Left ventricle myocardium inferior (tissue), 1 donor: ENCODE measurements at regions of chr11 and their contacts with region 1.

Region 1: GRCh38 chr11:101436511-101437142 is 147.2 kb downstream of the TRPC6 start:
- DNase-seq: no peak
- H3K4me3 ChIP-seq: no peak overlapping the region
- H3K27ac ChIP-seq: no peak overlapping the region
- H3K4me1 ChIP-seq: peaks cover 14% of the 10 kb centered on the region
- H3K27me3 ChIP-seq: no peaks in the 10 kb centered on the region
- CTCF ChIP-seq: peak; percentile 72

Region 2: GRCh38 chr11:100970283-100971164 is 466.1 kb before region 1 on chr11:
- intact Hi-C with region 1: loop called (anchors 10 kb)
- DNase-seq: no peak
- H3K4me3 ChIP-seq: no peak overlapping the region
- H3K27ac ChIP-seq: peak overlapping the region; percentile 67
- H3K4me1 ChIP-seq: peaks cover 13% of the 10 kb centered on the region
- H3K27me3 ChIP-seq: no peaks in the 10 kb centered on the region
- CTCF ChIP-seq: no peak

Region 3: DNA sequence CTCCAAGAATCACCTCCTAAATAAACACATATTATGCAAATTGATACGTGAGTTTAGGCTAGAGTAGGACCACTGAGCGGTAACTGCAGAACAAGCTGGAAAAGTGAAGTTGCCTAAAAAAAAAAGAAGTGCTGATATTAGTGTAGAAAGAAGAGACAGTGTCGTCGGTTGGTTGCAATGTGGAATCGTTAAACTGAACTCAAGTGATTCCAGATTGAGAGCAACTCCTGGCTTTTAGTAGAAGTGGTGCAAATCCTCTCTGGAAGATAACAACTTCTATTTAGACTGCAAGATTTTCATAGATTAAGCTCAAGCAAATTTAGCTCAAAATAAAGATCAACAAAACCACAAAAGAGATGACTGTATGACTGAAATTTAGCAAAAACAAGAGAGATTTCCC is 210.0 kb before region 1 on chr11:
- intact Hi-C with region 1: no loop called
- DNase-seq: no peak
- H3K4me3 ChIP-seq: no peak overlapping the region
- H3K27ac ChIP-seq: no peak overlapping the region
- H3K4me1 ChIP-seq: no peaks in the 10 kb centered on the region
- H3K27me3 ChIP-seq: no peaks in the 10 kb centered on the region
- CTCF ChIP-seq: no peak